ENCODE measurements at regions of chr1 and their contacts with region 1.

Region 1: DNA sequence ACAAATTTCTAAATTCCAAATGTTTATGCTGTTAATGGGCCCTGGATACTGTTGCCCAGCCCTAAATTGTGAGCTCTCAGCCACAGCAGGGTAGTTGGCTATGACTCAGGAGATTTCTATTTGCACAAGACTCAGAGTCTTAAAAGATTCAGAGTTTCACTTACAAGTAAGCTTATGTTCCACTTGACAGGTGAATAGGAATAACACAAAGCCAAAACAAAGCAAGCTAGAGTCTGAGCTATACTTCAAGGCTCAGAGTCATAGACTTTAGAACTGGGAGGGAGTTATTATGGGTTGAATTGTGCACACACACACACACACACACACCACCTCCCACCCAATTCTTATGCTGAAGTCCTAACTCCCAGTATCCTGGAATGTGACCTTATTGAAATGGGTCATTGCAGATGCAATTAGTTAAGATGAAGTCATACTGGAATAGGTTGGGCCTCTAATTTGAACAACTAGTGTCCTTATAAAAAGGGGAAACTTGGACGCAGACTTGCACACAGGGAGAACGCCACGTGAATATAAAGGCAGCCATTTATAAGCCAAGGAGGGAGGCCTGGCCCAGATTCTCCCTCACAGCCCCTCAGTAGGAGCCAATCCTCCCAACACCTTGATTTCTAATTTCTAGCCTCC is 30.2 kb downstream of the PRDX6 start:
- DNase-seq: peak; percentile 49 to 92
- H3K4me3 ChIP-seq: peak overlapping the region; percentile 25; the same call in 1 of the 2 replicates
- H3K27ac ChIP-seq: peak overlapping the region; percentile 84
- H3K4me1 ChIP-seq: peaks cover 38% of the 10 kb centered on the region
- H3K27me3 ChIP-seq: no peaks in the 10 kb centered on the region
- CTCF ChIP-seq: no peak

Region 2: GRCh38 chr1:173714759-173715537 is 207.6 kb after region 1 on chr1 and contains the start of gene KLHL20:
- CTCF ChIA-PET with region 1: no interaction called
- POLR2A ChIA-PET with region 1: interaction called, 3 read pairs
- intact Hi-C with region 1: loop called (anchors 10 kb)
- DNase-seq: peak; percentile 85 to 89
- H3K4me3 ChIP-seq: peak within 1 kb of the TSS; percentile 67
- H3K27ac ChIP-seq: peak within 1 kb of the TSS; percentile 56
- H3K4me1 ChIP-seq: peaks cover 28% of the 10 kb centered on the region
- H3K27me3 ChIP-seq: no peaks in the 10 kb centered on the region
- CTCF ChIP-seq: no peak
- total RNA-seq, gene KLHL20: 11.5 and 15.3 TPM in 2 replicates

Measured in PC-9 (cell line).